ENCODE measurements at regions of chr15 and their contacts with region 1.

Region 1: GRCh38 chr15:99565299-99566156 is at the start of gene MEF2A:
- DNase-seq: peak; percentile 92 to 94 (median 92)
- H3K4me3 ChIP-seq: peak within 1 kb of the TSS; percentile 63 to 99
- H3K4me3 Mint-ChIP-seq: peak within 1 kb of the TSS; percentile 95 to 100 (median 98)
- H3K27ac ChIP-seq: peak within 1 kb of the TSS; percentile 85
- H3K27ac Mint-ChIP-seq: peak within 1 kb of the TSS; percentile 95 to 99 (median 97)
- H3K4me1 ChIP-seq: peaks cover 29% of the 10 kb centered on the region
- H3K4me1 Mint-ChIP-seq: peaks cover 28 to 45% (median 36%) of the 10 kb centered on the region in 4 donors
- H3K27me3 ChIP-seq: no peaks in the 10 kb centered on the region
- H3K27me3 Mint-ChIP-seq: peaks cover 0 to 3% of the 10 kb centered on the region in 2 donors
- total RNA-seq, gene MEF2A: 27.6 to 27.8 TPM

Region 2: GRCh38 chr15:99250494-99251435 is 314.8 kb before region 1 on chr15:
- CTCF ChIA-PET with region 1: no interaction called
- POLR2A ChIA-PET with region 1: interaction called, 4 read pairs
- intact Hi-C with region 1: loop called (anchors 1 kb)
- DNase-seq: peak; percentile 90 to 95 (median 93)
- H3K4me3 ChIP-seq: peak overlapping the region; percentile 47 to 73
- H3K4me3 Mint-ChIP-seq: peak overlapping the region; percentile 84 to 96 (median 92)
- H3K27ac ChIP-seq: peak overlapping the region; percentile 60
- H3K27ac Mint-ChIP-seq: peak overlapping the region; percentile 70 to 95 (median 90)
- H3K4me1 ChIP-seq: peaks cover 31% of the 10 kb centered on the region
- H3K4me1 Mint-ChIP-seq: peaks cover 17 to 33% (median 29%) of the 10 kb centered on the region in 4 donors
- H3K27me3 ChIP-seq: no peaks in the 10 kb centered on the region
- H3K27me3 Mint-ChIP-seq: no peaks in the 10 kb centered on the region

Region 3: DNA sequence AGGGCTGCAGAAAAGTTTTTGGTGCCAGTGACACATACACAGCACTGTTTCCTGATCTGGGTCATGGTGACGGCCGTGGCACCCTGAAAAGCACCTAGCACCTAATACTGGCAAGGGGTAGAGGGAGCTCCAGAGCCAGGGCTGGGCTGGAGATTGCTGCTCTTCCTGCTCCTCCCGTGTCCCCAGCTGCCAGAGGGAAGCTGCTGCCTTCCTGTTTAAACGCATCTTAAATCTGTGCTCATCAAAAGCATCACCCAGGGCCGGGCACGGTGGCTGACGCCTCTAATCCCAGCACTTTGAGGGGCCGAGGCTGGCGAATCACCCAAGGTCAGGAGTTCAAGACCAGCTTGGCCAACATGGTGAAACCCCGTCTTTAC is 156.4 kb before region 1 on chr15:
- CTCF ChIA-PET with region 1: interaction called, 4 read pairs
- POLR2A ChIA-PET with region 1: interaction called, 17 read pairs
- intact Hi-C with region 1: no loop called
- DNase-seq: peak in 3 of 5 donors; percentile 7 to 26 (median 25)
- H3K4me3 ChIP-seq: no peak overlapping the region
- H3K4me3 Mint-ChIP-seq: no peak overlapping the region
- H3K27ac ChIP-seq: no peak overlapping the region
- H3K27ac Mint-ChIP-seq: no peak overlapping the region
- H3K4me1 ChIP-seq: peaks cover 8% of the 10 kb centered on the region
- H3K4me1 Mint-ChIP-seq: peaks cover 5 to 21% (median 6%) of the 10 kb centered on the region in 4 donors
- H3K27me3 ChIP-seq: no peaks in the 10 kb centered on the region
- H3K27me3 Mint-ChIP-seq: peaks cover 2 to 4% of the 10 kb centered on the region in 2 donors

Region 4: DNA sequence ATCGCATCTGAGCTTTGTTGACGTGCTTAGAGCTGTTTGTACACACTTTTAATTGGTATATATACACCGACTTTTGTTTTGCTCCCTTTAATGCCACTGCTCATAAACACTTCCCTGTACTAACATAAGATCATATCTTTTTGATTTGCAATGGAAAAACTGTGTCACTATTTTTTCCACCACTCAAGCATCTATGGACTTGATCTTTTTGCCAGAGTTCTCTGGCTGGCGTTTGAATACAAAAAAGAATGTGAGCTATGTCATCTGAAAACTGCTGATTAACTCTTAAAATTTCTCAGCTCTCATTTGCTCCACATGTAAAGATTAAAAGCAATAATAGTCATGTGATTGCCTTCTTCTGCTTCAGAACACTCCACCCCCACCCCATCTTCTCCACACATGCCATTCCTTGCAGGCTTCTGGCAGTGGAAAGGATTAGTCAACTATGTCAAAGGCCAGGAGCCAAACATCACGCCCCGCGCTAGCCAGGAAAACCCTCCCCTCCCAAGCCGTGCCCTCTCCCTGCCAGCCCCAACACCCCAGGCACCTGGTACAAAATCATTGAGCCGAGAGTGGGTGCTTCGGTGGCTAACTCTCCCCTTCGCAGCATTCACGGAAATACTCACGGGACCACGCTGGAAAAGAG is 123.2 kb before region 1 on chr15:
- CTCF ChIA-PET with region 1: no interaction called
- POLR2A ChIA-PET with region 1: interaction called, 27 read pairs
- intact Hi-C with region 1: loop called (anchors 10 kb)
- DNase-seq: no peak
- H3K4me3 ChIP-seq: no peak overlapping the region
- H3K4me3 Mint-ChIP-seq: peak overlapping the region in 7 of 8 donors; percentile 4 to 63 (median 50)
- H3K27ac ChIP-seq: no peak overlapping the region
- H3K27ac Mint-ChIP-seq: peak overlapping the region; percentile 14 to 83 (median 71)
- H3K4me1 ChIP-seq: peaks cover 42% of the 10 kb centered on the region
- H3K4me1 Mint-ChIP-seq: peaks cover 16 to 54% (median 33%) of the 10 kb centered on the region in 4 donors
- H3K27me3 ChIP-seq: no peaks in the 10 kb centered on the region
- H3K27me3 Mint-ChIP-seq: no peaks in the 10 kb centered on the region

Region 5: DNA sequence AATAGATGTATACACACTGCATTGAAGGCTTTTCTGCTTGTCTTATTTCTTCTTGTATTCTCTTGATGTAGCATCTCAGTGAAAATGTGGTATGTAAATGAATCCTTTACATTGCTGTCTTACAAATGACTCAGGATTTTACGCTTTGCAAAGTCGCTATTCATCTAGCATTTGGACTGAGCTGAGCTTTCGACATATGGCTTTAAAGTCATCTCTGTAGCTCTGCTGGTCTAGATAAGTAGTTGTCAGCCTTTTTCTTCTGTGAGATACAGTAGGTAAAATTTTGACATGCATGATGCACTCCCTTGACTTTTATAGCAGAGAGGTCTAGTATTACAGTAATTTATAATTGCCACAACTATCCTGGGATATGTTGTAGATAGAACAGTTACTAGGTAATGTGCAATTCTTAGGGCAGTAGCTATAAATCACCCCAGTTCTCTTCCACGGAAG is 17.0 kb after region 1 on chr15:
- CTCF ChIA-PET with region 1: interaction called, 3 read pairs
- POLR2A ChIA-PET with region 1: interaction called, 10 read pairs
- intact Hi-C with region 1: no loop called
- DNase-seq: no peak
- H3K4me3 ChIP-seq: no peak overlapping the region
- H3K4me3 Mint-ChIP-seq: no peak overlapping the region
- H3K27ac ChIP-seq: no peak overlapping the region
- H3K27ac Mint-ChIP-seq: no peak overlapping the region
- H3K4me1 ChIP-seq: peaks cover 16% of the 10 kb centered on the region
- H3K4me1 Mint-ChIP-seq: peaks cover 28 to 46% (median 37%) of the 10 kb centered on the region in 4 donors
- H3K27me3 ChIP-seq: no peaks in the 10 kb centered on the region
- H3K27me3 Mint-ChIP-seq: no peaks in the 10 kb centered on the region

Region 6: GRCh38 chr15:99733268-99734039 is 167.9 kb after region 1 on chr15 and contains the start of gene LYSMD4:
- CTCF ChIA-PET with region 1: no interaction called
- POLR2A ChIA-PET with region 1: interaction called, 21 read pairs
- intact Hi-C with region 1: loop called (anchors 1 kb)
- DNase-seq: peak; percentile 95 to 97 (median 96)
- H3K4me3 ChIP-seq: peak within 1 kb of the TSS; percentile 6 to 67
- H3K4me3 Mint-ChIP-seq: peak within 1 kb of the TSS; percentile 83 to 95 (median 87)
- H3K27ac ChIP-seq: peak within 1 kb of the TSS; percentile 46
- H3K27ac Mint-ChIP-seq: peak within 1 kb of the TSS; percentile 80 to 97 (median 88)
- H3K4me1 ChIP-seq: peaks cover 14% of the 10 kb centered on the region
- H3K4me1 Mint-ChIP-seq: peaks cover 12 to 24% (median 16%) of the 10 kb centered on the region in 4 donors
- H3K27me3 ChIP-seq: no peaks in the 10 kb centered on the region
- H3K27me3 Mint-ChIP-seq: no peaks in the 10 kb centered on the region
- total RNA-seq, gene LYSMD4: 18.0 to 19.0 TPM